ENCODE measurements at regions of chr9 and their contacts with region 1.

Region 1: DNA sequence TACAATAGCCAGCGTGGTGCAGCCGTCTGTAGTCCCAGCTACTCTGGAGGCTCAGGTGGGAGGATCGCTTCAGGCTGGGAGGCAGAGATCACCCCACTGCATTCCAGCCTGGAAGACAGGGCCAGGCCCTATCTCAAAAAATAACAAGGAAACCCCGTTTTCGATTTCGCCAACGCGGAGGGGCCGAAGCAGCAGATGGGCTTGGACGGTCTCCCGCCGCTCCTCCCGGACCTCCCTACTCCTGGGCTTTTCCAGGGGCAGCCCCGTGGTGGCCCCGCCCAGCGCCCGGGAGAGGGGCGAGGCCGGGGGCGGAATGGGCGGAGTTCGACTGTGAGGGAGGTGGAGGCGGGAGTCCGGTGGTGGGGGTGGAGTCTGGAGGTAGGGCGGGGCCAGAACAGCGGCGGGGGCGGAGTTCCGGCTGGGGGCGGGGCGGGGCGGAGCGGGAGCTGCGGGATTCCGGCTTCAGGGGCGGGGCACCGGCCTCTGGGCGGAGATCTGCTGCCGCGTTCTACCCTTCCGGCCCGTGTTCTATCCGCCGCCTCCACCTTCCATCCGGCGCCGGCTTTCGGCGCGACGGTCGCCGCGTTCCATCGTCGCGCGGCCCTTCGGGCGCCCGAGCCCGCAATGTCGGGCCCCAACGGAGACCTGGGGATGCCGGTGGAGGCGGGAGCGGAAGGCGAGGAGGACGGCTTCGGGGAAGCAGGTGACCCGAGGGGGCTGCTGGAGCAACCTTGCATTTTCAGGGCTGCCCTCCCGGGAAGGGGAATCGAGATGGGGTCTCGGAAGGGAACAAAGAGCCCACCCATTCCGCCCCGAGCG is at the start of gene BBLN:
- DNase-seq: peak; percentile 92
- ATAC-seq: peak; percentile 94
- H3K4me3 ChIP-seq: peak within 1 kb of the TSS; percentile 70 to 99 (median 86)
- H3K4me3 Mint-ChIP-seq: peak within 1 kb of the TSS; percentile 83
- H3K27ac ChIP-seq: peak within 1 kb of the TSS; percentile 72
- H3K27ac Mint-ChIP-seq: peak within 1 kb of the TSS; percentile 87
- H3K4me1 ChIP-seq: peaks cover 6 to 17% of the 10 kb centered on the region in 2 donors
- H3K4me1 Mint-ChIP-seq: peaks cover 12% of the 10 kb centered on the region
- H3K27me3 ChIP-seq: no peaks in the 10 kb centered on the region
- H3K27me3 Mint-ChIP-seq: no peaks in the 10 kb centered on the region
- CTCF ChIP-seq: no peak
- total RNA-seq, gene BBLN: 38.2 and 44.3 TPM in 2 replicates

Region 2: DNA sequence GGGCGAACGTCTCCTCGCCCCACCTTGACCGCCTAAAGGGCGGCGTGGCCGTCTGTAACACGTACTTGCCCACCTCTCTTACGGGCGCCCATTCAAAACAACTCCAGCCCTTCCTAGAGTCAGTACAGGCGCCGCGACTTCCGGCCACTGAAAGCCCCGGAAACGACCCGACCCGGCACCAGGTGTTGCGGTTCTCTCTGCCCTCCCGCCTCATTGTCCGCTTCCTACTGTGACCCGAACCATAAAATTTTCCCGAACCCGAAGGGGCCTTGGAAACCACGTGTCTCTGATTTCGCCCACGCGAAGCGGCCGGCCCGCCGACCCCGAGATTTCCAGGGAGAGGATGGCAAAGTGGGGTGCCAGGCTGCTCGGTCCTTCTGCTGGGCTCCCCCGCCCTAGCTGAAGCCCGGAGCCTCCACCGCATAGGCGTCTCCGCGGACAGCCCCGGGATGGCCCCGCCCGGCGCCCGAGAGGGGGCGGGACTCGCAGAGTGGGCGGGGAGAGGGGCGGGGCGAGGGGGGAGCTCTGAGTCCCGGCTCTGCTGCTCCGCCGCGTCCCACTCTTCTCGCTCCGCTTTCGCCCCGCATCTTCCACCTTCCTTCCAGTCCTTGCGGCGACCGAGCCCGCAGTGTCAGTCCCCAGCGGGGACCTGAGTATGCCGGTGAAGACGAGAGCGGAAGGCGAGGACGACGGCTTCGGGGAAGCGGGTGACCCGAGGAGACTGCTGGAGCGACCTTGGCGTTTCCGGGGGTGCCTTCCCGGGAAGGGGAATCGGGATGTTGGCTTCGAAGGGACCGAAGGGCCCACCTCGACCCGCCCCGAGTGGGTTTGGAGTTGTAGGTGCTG is 31.8 kb before region 1 on chr9:
- CTCF ChIA-PET with region 1: interaction called, 4 read pairs
- POLR2A ChIA-PET with region 1: interaction called, 4 read pairs
- intact Hi-C with region 1: loop called (anchors 1 kb)
- DNase-seq: peak; percentile 97
- ATAC-seq: peak; percentile 78
- H3K4me3 ChIP-seq: peak overlapping the region; percentile 58 to 97 (median 83)
- H3K4me3 Mint-ChIP-seq: peak overlapping the region; percentile 95
- H3K27ac ChIP-seq: peak overlapping the region; percentile 93 to 99
- H3K27ac Mint-ChIP-seq: peak overlapping the region; percentile 99
- H3K4me1 ChIP-seq: peaks cover 26 to 34% of the 10 kb centered on the region in 2 donors
- H3K4me1 Mint-ChIP-seq: peaks cover 35% of the 10 kb centered on the region
- H3K27me3 ChIP-seq: peaks cover 0 to 6% (median 0%) of the 10 kb centered on the region in 4 experiments
- H3K27me3 Mint-ChIP-seq: peaks cover 7% of the 10 kb centered on the region
- CTCF ChIP-seq: no peak

Region 3: GRCh38 chr9:128191406-128192046 is 31.5 kb after region 1 on chr9 and contains the start of gene CIZ1:
- CTCF ChIA-PET with region 1: interaction called, 5 read pairs
- POLR2A ChIA-PET with region 1: interaction called, 11 read pairs
- intact Hi-C with region 1: loop called (anchors 1 kb)
- DNase-seq: peak; percentile 88
- ATAC-seq: peak; percentile 90
- H3K4me3 ChIP-seq: peak within 1 kb of the TSS; percentile 26 to 82 (median 73)
- H3K4me3 Mint-ChIP-seq: peak within 1 kb of the TSS; percentile 94
- H3K27ac ChIP-seq: peak within 1 kb of the TSS; percentile 44 to 76
- H3K27ac Mint-ChIP-seq: peak within 1 kb of the TSS; percentile 92
- H3K4me1 ChIP-seq: peaks cover 12 to 24% of the 10 kb centered on the region in 2 donors
- H3K4me1 Mint-ChIP-seq: peaks cover 29% of the 10 kb centered on the region
- H3K27me3 ChIP-seq: no peaks in the 10 kb centered on the region
- H3K27me3 Mint-ChIP-seq: no peaks in the 10 kb centered on the region
- CTCF ChIP-seq: peak; percentile 84
- total RNA-seq, gene CIZ1: 160 and 169 TPM in 2 replicates

Measured in B cell (primary cell).